Activated naive CD4-positive, alpha-beta T cell treated with anti-CD3 and anti-CD28 coated beads for 36 hours (primary cell): ENCODE measurements at regions of chr4 and their contacts with region 1.

Region 1: DNA sequence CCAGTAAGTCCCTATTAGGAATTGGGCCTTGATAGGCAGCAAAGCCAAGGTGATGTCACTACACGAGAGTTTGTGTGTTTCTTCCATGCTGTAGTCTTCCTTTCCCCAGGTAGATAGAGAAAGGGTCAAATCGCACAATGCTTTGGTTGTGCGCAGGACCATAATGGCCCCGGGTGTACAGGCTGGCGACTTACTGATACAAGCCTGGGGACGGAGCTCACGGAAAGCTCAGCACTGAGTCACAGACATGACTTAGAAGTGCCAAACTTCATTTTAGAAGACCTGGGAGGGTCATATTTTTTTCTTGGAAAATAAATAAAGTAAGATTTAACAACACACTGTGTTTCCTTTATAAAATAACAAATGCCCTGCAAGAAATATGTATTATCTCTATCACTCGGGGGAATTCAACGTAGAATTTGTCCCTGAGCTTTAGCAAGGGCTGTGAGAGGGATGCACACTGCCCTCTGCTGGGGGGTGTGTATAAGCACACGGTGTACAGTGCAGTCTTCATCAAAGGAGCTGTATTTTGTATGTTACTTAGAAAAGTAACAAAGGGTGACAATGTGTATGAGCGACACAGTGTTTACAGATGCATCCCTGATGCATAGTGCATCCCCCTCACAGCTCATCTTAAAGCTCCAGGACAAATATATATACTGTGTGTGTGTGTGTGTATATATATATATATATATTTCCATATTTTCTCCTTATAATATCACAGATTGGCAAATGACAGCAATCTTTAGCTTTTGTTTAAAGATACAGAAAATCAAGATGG is 254.5 kb upstream of the VEGFC start:
- DNase-seq: peak; percentile 72
- H3K4me3 Mint-ChIP-seq: no peak overlapping the region
- H3K27ac Mint-ChIP-seq: no peak overlapping the region
- H3K4me1 Mint-ChIP-seq: no peaks in the 10 kb centered on the region
- H3K27me3 Mint-ChIP-seq: peaks cover 9% of the 10 kb centered on the region

Region 2: DNA sequence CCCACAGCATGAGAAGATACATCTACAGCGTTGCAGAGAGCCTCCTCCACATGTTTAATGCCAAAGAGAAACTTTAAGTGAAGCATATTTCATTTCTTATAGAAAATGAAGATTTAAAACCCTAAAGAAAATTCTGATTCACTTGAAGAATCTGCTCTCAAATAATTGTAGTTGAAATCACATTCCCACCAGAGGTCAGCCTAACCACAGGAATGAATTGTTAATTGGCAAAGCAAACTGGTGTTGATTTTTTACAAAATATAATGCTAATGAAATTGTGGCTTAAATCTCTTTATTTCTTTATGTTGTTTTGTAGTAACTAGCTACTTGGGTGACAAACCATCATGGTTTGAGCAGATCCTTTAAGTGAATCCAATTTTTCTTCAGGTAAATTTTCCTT is 1012.8 kb before region 1 on chr4:
- CTCF ChIA-PET with region 1: no interaction called
- intact Hi-C with region 1: loop called (anchors 5 kb)
- DNase-seq: peak; percentile 28
- H3K4me3 Mint-ChIP-seq: no peak overlapping the region
- H3K27ac Mint-ChIP-seq: no peak overlapping the region
- H3K4me1 Mint-ChIP-seq: no peaks in the 10 kb centered on the region
- H3K27me3 Mint-ChIP-seq: no peaks in the 10 kb centered on the region

Region 3: DNA sequence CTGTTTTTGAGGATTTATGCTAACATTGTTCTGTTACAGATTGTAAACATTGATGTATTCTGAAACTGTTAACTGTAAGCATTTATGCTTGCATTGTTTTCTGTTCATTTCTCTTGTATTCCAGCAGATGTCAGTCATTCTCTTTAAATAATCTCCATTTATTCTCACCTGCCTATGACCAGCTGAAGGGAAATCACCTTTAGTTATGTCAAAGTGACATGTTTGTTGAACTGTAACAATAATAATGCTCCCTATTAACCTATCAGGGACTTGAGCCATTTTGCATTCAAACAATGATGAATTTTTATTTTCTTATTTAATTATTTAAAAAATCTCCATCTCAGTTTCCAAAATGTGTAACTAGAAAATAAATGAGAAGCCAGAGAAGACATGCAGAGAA is 669.5 kb before region 1 on chr4:
- CTCF ChIA-PET with region 1: interaction called, 22 read pairs
- intact Hi-C with region 1: loop called (anchors 1 kb)
- DNase-seq: no peak
- H3K4me3 Mint-ChIP-seq: no peak overlapping the region
- H3K27ac Mint-ChIP-seq: no peak overlapping the region
- H3K4me1 Mint-ChIP-seq: no peaks in the 10 kb centered on the region
- H3K27me3 Mint-ChIP-seq: peaks cover 3% of the 10 kb centered on the region

Region 4: GRCh38 chr4:176789955-176790354 is 257.3 kb before region 1 on chr4:
- CTCF ChIA-PET with region 1: interaction called, 4 read pairs
- intact Hi-C with region 1: loop called (anchors 1 kb)
- DNase-seq: no peak
- H3K4me3 Mint-ChIP-seq: no peak overlapping the region
- H3K27ac Mint-ChIP-seq: no peak overlapping the region
- H3K4me1 Mint-ChIP-seq: peaks cover 5% of the 10 kb centered on the region
- H3K27me3 Mint-ChIP-seq: peaks cover 46% of the 10 kb centered on the region

Region 5: GRCh38 chr4:176896211-176896610 is 151.0 kb before region 1 on chr4:
- CTCF ChIA-PET with region 1: interaction called, 3 read pairs
- intact Hi-C with region 1: loop called (anchors 5 kb)
- DNase-seq: no peak
- H3K4me3 Mint-ChIP-seq: no peak overlapping the region
- H3K27ac Mint-ChIP-seq: no peak overlapping the region
- H3K4me1 Mint-ChIP-seq: no peaks in the 10 kb centered on the region
- H3K27me3 Mint-ChIP-seq: no peaks in the 10 kb centered on the region

Region 6: GRCh38 chr4:177339477-177340374 is 292.5 kb after region 1 on chr4:
- CTCF ChIA-PET with region 1: no interaction called
- intact Hi-C with region 1: loop called (anchors 10 kb)
- DNase-seq: no peak
- H3K4me3 Mint-ChIP-seq: no peak overlapping the region
- H3K27ac Mint-ChIP-seq: no peak overlapping the region
- H3K4me1 Mint-ChIP-seq: peaks cover 5% of the 10 kb centered on the region
- H3K27me3 Mint-ChIP-seq: no peaks in the 10 kb centered on the region